Caco-2 (cell line): ENCODE measurements at regions of chr22 and their contacts with region 1.

Region 1: GRCh38 chr22:35914665-35915476 is 113.8 kb downstream of the RBFOX2 start:
- DNase-seq: peak; percentile 84 to 87
- H3K4me3 ChIP-seq: peak overlapping the region; percentile 39
- H3K4me3 Mint-ChIP-seq: peak overlapping the region; percentile 87
- H3K27ac Mint-ChIP-seq: peak overlapping the region; percentile 76
- H3K4me1 ChIP-seq: peaks cover 37% of the 10 kb centered on the region
- H3K4me1 Mint-ChIP-seq: peaks cover 62% of the 10 kb centered on the region
- H3K27me3 ChIP-seq: no peaks in the 10 kb centered on the region
- H3K27me3 Mint-ChIP-seq: no peaks in the 10 kb centered on the region
- CTCF ChIP-seq: no peak

Region 2: GRCh38 chr22:35777335-35777975 is 137.4 kb before region 1 on chr22:
- CTCF ChIA-PET with region 1: no interaction called
- POLR2A ChIA-PET with region 1: no interaction called
- intact Hi-C with region 1: no loop called
- DNase-seq: no peak
- H3K4me3 ChIP-seq: no peak overlapping the region
- H3K4me3 Mint-ChIP-seq: no peak overlapping the region
- H3K27ac Mint-ChIP-seq: no peak overlapping the region
- H3K4me1 ChIP-seq: peaks cover 13% of the 10 kb centered on the region
- H3K4me1 Mint-ChIP-seq: peaks cover 7% of the 10 kb centered on the region
- H3K27me3 ChIP-seq: no peaks in the 10 kb centered on the region
- H3K27me3 Mint-ChIP-seq: no peaks in the 10 kb centered on the region
- CTCF ChIP-seq: no peak

Region 3: GRCh38 chr22:35866651-35867050 is 48.2 kb before region 1 on chr22:
- CTCF ChIA-PET with region 1: no interaction called
- POLR2A ChIA-PET with region 1: no interaction called
- intact Hi-C with region 1: no loop called
- DNase-seq: no peak
- H3K4me3 ChIP-seq: no peak overlapping the region
- H3K4me3 Mint-ChIP-seq: no peak overlapping the region
- H3K27ac Mint-ChIP-seq: no peak overlapping the region
- H3K4me1 ChIP-seq: peaks cover 17% of the 10 kb centered on the region
- H3K4me1 Mint-ChIP-seq: peaks cover 26% of the 10 kb centered on the region
- H3K27me3 ChIP-seq: no peaks in the 10 kb centered on the region
- H3K27me3 Mint-ChIP-seq: no peaks in the 10 kb centered on the region
- CTCF ChIP-seq: no peak

Region 4: DNA sequence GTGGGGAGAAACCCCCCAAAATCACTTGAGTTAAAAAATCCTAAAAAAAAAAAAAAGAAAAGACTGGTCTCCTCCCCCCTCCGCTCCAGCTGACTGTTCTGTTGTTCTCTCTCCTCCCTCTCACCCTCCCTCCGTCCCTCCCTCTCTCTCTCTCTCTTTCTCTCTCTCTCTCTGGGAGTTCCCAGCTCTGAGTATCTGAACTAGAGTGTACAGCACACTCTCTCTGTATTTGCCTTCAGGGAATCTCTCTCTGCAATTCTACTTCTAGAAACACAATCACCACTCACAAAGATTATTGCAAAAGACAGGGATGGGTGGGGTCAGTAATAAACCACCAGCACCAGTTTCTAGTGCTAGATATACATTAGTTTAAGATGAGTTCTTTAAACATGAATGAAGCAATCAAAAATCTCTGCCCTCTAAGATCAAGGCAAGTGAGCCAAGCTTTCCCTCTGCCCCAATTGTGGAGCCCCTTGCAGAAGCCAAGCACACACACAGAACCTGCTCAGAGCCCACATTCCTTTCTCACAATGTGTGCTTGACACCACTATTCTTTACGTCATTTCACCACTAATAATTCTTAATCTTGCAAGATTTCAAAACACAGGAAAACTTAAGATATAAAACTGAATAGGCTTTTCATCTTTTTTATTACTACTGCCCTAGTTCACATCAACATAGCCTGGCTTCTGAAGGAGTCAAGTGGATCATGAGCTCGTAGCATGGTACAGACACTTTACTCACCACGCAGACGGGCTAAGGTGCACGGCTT is 19.7 kb before region 1 on chr22:
- CTCF ChIA-PET with region 1: no interaction called
- POLR2A ChIA-PET with region 1: no interaction called
- intact Hi-C with region 1: loop called (anchors 2 kb)
- DNase-seq: peak; percentile 42 to 55
- H3K4me3 ChIP-seq: no peak overlapping the region
- H3K4me3 Mint-ChIP-seq: peak overlapping the region; percentile 69
- H3K27ac Mint-ChIP-seq: peak overlapping the region; percentile 67
- H3K4me1 ChIP-seq: peaks cover 80% of the 10 kb centered on the region
- H3K4me1 Mint-ChIP-seq: peaks cover 51% of the 10 kb centered on the region
- H3K27me3 ChIP-seq: no peaks in the 10 kb centered on the region
- H3K27me3 Mint-ChIP-seq: no peaks in the 10 kb centered on the region
- CTCF ChIP-seq: no peak